ENCODE measurements at regions of chr11 and their contacts with region 1.

Region 1: GRCh38 chr11:44727373-44728287 is 868 bp downstream of the TSPAN18 start:
- DNase-seq: peak; percentile 77 to 82 (median 79)
- H3K4me3 ChIP-seq: peak overlapping the region; percentile 17 to 74
- H3K4me3 Mint-ChIP-seq: peak overlapping the region; percentile 86 to 94 (median 92)
- H3K27ac ChIP-seq: peak overlapping the region; percentile 66
- H3K27ac Mint-ChIP-seq: peak overlapping the region; percentile 86 to 94 (median 93)
- H3K4me1 ChIP-seq: peaks cover 57% of the 10 kb centered on the region
- H3K4me1 Mint-ChIP-seq: peaks cover 43 to 64% (median 53%) of the 10 kb centered on the region in 4 donors
- H3K27me3 ChIP-seq: no peaks in the 10 kb centered on the region
- H3K27me3 Mint-ChIP-seq: no peaks in the 10 kb centered on the region

Region 2: GRCh38 chr11:44621140-44621681 is 106.4 kb before region 1 on chr11:
- CTCF ChIA-PET with region 1: no interaction called
- POLR2A ChIA-PET with region 1: no interaction called
- intact Hi-C with region 1: loop called (anchors 2 kb)
- DNase-seq: peak; percentile 55 to 64 (median 57)
- H3K4me3 ChIP-seq: no peak overlapping the region
- H3K4me3 Mint-ChIP-seq: peak overlapping the region in 1 of 8 donors; percentile 25
- H3K27ac ChIP-seq: no peak overlapping the region
- H3K27ac Mint-ChIP-seq: peak overlapping the region in 5 of 7 donors; percentile 25 to 52 (median 41)
- H3K4me1 ChIP-seq: peaks cover 28% of the 10 kb centered on the region
- H3K4me1 Mint-ChIP-seq: peaks cover 18 to 62% (median 42%) of the 10 kb centered on the region in 4 donors
- H3K27me3 ChIP-seq: no peaks in the 10 kb centered on the region
- H3K27me3 Mint-ChIP-seq: no peaks in the 10 kb centered on the region

Region 3: GRCh38 chr11:44680982-44681597 is 46.5 kb before region 1 on chr11:
- CTCF ChIA-PET with region 1: interaction called, 4 read pairs
- POLR2A ChIA-PET with region 1: interaction called, 15 read pairs
- intact Hi-C with region 1: loop called (anchors 2 kb)
- DNase-seq: peak; percentile 66 to 78 (median 69)
- H3K4me3 ChIP-seq: peak overlapping the region; percentile 44 to 67
- H3K4me3 Mint-ChIP-seq: peak overlapping the region; percentile 70 to 91 (median 88)
- H3K27ac ChIP-seq: peak overlapping the region; percentile 48
- H3K27ac Mint-ChIP-seq: peak overlapping the region; percentile 49 to 95 (median 84)
- H3K4me1 ChIP-seq: peaks cover 52% of the 10 kb centered on the region
- H3K4me1 Mint-ChIP-seq: peaks cover 43 to 75% (median 54%) of the 10 kb centered on the region in 4 donors
- H3K27me3 ChIP-seq: no peaks in the 10 kb centered on the region
- H3K27me3 Mint-ChIP-seq: no peaks in the 10 kb centered on the region

Region 4: DNA sequence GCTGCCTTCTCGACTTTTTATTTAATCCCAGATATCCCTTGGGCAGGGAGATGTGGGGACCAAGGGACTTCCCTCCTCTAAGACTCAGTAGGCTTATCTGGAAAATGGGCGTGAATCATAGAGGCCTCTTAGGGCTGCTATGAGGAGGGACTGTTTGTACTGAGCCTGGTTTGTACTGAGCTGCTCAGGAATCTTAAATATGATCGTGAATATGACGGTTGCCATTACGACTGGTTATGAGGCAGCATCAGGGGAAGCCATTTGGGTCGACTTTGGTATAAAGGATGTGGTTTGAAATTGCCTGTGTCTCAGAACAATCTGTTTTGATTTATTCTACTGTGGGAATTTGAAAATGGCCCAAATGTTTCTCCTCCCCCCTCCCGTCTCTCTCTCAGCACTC is 19.7 kb after region 1 on chr11:
- CTCF ChIA-PET with region 1: interaction called, 4 read pairs
- POLR2A ChIA-PET with region 1: interaction called, 7 read pairs
- intact Hi-C with region 1: loop called (anchors 2 kb)
- DNase-seq: peak in 4 of 5 donors; percentile 38 to 46 (median 44)
- H3K4me3 ChIP-seq: no peak overlapping the region
- H3K4me3 Mint-ChIP-seq: peak overlapping the region in 7 of 8 donors; percentile 29 to 80 (median 62)
- H3K27ac ChIP-seq: peak overlapping the region; percentile 28
- H3K27ac Mint-ChIP-seq: peak overlapping the region; percentile 24 to 88 (median 73)
- H3K4me1 ChIP-seq: peaks cover 54% of the 10 kb centered on the region
- H3K4me1 Mint-ChIP-seq: peaks cover 53 to 94% (median 70%) of the 10 kb centered on the region in 4 donors
- H3K27me3 ChIP-seq: no peaks in the 10 kb centered on the region
- H3K27me3 Mint-ChIP-seq: no peaks in the 10 kb centered on the region

Region 5: DNA sequence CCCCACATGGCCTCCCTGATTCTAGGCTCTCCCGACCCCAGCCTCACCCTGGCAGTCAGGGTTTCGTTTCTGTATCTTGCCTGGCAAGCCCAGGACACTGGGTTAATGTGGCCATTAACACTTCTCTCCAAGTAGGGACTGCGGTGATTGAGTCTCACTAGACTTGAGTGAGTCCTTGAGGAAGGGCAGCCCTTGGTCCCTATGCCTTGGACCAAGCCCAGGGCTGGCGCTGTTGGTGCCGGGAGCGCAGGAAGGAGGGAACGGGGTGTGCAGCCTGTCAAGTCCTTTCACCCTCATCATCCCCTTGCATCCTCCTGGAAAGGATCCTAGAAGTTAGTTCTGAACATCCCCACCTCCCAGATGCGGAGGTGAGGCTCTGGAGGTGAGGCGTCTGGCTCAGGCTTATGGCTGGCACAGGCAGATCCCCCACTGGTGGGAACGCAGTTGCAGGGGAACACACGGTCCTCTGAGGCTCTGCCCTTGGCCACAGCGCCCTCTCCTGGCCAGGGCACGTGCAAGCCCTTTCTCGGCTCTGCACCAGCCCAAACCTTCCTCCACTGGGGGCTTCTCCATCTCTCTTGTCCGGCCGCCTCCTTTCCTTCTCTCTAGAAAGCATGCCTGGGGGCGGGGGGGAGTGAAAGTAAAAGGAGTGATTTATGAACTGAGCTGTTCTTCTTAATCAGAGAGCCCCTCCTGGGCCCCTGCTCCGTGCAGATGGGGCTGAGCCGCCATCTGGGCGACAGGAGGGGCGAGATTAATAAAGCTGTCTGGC is 166.4 kb after region 1 on chr11:
- CTCF ChIA-PET with region 1: interaction called, 3 read pairs
- POLR2A ChIA-PET with region 1: no interaction called
- intact Hi-C with region 1: loop called (anchors 1 kb)
- DNase-seq: peak; percentile 50 to 56 (median 54)
- H3K4me3 ChIP-seq: no peak overlapping the region
- H3K4me3 Mint-ChIP-seq: no peak overlapping the region
- H3K27ac ChIP-seq: no peak overlapping the region
- H3K27ac Mint-ChIP-seq: peak overlapping the region in 1 of 7 donors; percentile 17
- H3K4me1 ChIP-seq: no peaks in the 10 kb centered on the region
- H3K4me1 Mint-ChIP-seq: peaks cover 2 to 18% (median 12%) of the 10 kb centered on the region in 4 donors
- H3K27me3 ChIP-seq: no peaks in the 10 kb centered on the region
- H3K27me3 Mint-ChIP-seq: no peaks in the 10 kb centered on the region